Posterior cingulate gyrus (tissue), 11 donors: ENCODE measurements at regions of chr11 and their contacts with region 1.

Region 1: GRCh38 chr11:61733120-61733978 is 19.1 kb upstream of the MYRF start:
- DNase-seq: peak; percentile 82 to 98 (median 91)

Region 2: DNA sequence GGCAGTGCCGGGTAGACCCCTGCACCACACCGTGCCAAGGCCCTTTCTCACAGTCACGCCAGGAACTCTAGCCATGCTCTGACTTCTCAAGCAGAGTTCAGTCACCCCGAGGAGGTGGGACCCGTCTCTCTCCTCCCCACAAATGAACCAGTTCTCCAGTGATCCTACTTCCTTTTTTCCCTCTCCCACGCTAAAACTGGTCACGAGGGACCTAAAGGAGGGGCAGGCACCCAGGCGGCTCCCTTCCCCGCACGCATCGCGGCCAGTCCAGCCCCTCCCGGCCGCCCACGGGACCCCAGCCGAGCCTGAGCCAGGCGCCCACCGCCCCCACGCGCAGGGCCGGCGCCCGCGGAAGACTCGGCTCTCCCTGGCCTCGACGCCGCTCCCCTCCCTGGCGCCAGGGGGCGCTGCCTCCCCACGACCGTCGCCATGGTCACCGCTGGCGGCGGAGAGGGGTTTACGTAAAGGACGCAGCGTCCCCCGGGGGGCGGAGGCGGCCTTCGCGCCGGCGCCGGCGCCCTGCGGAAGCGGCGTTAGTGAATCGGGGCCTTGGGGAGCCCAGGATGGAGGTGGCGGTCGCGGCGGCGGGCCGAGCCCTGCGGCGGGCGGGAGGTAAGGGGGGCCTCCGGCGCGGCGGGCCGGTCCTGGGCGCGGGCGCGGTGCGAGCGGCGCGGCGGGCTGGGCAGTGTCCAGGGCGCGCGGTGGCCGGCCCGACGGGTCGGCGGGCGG is 53.3 kb before region 1 on chr11 and contains the start of gene DAGLA:
- intact Hi-C with region 1: loop called (anchors 1 kb)
- DNase-seq: peak; percentile 61 to 97 (median 82)